ENCODE measurements at regions of chr18 and their contacts with region 1.

Region 1: DNA sequence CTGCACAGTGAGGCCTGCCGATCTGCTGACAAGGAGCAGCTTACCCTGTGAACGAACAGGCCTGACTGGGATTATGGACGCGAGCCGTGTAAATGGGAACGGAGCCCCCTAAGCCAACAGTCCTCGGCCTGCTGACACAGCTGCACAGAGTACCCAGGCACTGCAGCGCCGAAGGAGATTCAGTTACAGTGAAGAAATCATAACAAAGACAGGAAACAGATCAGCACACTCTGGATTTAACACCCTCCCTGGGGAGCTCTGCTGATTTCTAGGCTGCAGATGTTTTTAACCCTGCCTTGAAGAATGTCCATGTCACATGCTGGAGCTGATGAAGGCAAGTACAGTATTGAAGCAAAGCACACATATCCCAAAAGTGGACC is 43.4 kb downstream of the COLEC12 start:
- DNase-seq: peak in 1 of 2 donors; percentile 48
- H3K4me3 ChIP-seq: no peak overlapping the region
- CTCF ChIP-seq: no peak
- POLR2A ChIP-seq: no peak

Region 2: GRCh38 chr18:136433-136832 is 320.7 kb before region 1 on chr18:
- intact Hi-C with region 1: no loop called
- DNase-seq: no peak
- H3K4me3 ChIP-seq: no peak overlapping the region
- CTCF ChIP-seq: no peak
- POLR2A ChIP-seq: no peak

Region 3: DNA sequence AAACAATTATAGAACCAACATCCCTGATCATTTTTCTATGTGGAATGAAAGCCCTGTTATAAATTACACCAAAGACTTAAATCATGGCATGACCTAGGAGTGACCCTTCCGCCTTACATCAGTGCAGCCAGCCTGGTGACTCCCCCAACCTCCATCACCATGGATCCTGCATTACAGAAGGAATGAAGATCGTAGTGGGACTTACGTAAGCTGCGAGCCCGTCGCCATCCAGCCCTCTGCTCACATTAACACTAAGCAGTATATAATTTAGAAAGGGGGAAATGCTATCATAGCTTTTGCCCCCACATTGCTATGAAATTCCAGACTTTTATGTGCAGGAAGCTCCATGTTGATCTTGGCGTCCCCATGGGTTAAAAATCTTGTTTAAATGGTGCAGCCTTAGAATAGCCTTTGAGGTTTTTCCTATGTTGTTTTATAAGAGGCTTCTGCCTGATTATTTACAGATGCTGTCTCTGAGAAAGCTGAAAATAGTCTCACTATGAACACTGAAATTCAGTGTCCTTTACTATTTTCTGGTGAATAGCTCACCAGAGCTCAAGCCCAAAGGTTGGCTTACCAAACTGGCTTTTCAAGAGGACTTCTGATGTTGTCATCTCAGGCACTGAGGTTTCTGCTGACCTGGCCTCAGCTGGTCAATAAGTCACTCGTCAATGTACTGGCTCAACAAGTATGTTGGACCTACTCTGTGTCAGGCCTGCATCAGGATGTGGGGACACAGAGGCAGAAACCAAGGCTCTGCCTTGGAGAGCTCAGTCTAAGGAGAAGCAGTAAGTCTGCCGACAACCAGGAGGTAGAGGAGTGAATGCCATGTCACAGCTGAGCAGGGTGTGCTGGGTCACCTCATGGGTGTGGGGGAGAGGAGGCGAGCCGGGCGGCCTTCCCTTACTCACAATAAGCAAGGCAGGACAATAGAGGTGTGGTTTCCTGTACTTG is 32.8 kb before region 1 on chr18:
- intact Hi-C with region 1: loop called (anchors 2 kb)
- DNase-seq: no peak
- H3K4me3 ChIP-seq: no peak overlapping the region
- CTCF ChIP-seq: no peak
- POLR2A ChIP-seq: no peak

Region 4: DNA sequence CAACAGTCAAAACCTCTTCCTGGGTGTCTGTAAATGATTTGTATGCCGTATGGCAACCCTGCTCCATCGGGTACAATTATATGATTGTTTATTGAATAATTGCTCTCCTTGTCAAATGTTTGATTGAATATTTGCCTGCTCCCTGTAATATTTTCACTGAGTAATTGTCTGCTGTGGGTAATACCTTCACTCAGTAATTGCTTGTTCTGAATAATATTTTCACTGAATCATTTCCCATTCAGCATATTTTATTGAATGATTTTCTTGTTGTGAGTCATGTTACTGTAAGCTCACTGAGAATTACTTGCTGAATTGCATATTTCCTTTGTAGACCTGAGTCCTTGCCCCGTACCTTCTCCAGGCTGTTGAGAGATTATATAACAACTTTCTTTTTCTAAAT is 1579.0 kb after region 1 on chr18:
- intact Hi-C with region 1: no loop called
- DNase-seq: no peak
- H3K4me3 ChIP-seq: no peak overlapping the region
- CTCF ChIP-seq: no peak
- POLR2A ChIP-seq: no peak